Left cardiac atrium (tissue), 4 donors: ENCODE measurements at regions of chr1 and their contacts with region 1.

Region 1: DNA sequence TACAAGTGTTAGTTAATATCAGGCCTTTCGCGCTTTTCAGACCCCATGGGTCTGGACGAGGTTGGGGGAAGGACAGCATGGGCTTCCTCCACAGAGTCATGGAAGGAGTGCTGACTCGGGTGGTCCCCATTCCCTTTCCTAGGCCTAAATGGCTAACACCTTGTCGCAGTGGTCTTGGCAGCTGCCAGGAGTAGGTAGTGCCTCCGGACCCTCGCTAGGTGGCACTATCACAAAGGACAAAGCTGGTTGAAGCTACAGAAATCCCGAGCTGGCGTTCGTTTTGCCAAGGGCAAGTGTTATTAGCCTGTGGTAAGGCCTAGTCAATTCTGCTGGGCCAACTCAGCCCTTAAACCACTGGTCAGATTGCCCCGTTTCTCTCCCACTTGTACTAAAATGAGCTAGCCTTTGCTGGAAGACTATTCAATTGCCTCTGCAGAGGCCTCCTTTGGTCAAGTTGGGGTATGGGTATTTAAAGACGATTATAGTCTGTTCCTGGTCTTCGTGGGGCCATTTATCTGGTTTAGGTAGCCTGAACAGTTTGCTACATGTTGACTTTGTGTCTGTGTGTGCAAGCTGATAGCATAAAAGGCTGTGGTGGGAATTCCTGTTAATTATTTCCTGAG is 1.1 kb upstream of the UBE2Q1 start:
- DNase-seq: peak; percentile 89
- ATAC-seq: peak; percentile 67 to 78

Region 2: DNA sequence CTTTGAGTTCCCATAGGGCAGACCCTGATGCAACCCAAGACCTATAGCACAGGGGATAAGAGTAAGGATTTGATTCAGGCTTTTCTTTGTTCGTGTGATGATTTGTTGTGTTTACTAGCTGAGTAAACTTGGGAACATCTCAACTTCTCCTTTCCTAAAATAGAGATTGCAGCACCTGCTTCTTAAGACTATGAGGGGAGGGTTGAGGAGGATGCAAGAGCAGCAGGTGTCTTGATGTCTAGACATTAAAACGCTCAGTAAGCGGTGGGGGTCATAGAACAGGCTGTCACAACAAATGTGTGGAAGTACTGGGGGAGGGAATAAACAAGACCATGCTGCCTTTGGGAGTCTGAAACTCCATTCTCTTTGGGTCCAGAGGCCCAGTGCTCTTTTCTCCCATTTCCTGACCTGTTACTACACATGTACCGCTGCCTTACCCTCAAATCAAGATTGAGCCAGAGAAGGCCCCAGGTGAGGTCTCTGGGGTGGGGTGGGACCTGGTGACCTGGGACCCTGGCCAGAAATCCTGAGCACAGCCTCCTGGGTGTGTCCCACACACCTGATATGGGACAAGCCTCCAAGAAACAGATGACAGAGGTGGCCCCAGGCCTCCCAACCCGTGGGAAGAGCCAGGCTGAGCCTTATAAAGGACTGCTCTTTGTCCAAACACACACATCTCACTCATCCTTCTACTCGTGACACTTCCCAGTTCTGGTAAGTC is 1143.6 kb before region 1 on chr1 and contains the start of gene S100A7A:
- intact Hi-C with region 1: no loop called
- DNase-seq: no peak
- ATAC-seq: no peak
- total RNA-seq, gene S100A7A: not detected

Region 3: GRCh38 chr1:154751690-154752089 is 192.1 kb after region 1 on chr1:
- intact Hi-C with region 1: loop called in 1 of 2 experiments (anchors 10 kb)
- DNase-seq: no peak
- ATAC-seq: peak; percentile 54 to 62

Region 4: GRCh38 chr1:154760469-154760933 is 200.9 kb after region 1 on chr1:
- intact Hi-C with region 1: loop called (anchors 10 kb)
- DNase-seq: peak; percentile 72
- ATAC-seq: peak; percentile 86 to 95

Region 5: DNA sequence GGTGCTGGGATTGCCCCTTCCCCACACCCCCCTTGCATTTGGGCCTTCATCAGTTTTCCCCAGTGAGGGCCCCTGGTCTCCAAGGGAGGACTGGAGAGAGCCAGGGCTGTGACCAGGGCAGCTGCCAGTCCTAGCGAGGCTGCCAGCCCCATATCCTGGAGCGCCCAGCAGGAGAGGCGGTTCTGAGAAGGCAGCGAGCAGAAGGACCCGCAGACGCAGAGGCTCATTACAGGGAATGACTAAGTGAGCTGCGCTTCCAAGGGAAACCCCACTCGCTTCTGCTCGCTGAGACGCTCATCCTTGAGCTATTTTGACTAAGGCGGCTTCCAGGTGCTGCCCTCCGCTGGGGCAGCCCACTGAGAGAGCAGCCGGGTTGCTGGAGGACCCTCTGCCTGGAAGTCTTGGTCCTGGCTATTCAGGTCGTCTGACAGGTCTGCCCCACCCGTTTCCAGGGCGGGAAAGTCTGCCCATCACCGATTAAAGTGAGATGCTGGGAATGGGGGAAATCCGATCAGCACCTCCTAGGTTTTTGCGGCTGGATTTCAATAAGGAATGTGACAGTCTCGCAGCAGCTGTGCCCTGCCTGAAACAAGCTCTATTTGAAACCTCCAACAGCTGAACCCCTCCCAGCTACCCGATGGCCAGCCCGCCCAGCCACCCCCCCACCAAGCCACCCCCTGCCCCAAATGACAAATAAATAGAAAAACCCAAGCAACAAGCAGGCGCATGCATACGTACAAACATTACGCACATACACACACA is 307.7 kb after region 1 on chr1:
- intact Hi-C with region 1: no loop called
- DNase-seq: peak; percentile 55
- ATAC-seq: peak in 1 of 2 donors; percentile 41

Region 6: DNA sequence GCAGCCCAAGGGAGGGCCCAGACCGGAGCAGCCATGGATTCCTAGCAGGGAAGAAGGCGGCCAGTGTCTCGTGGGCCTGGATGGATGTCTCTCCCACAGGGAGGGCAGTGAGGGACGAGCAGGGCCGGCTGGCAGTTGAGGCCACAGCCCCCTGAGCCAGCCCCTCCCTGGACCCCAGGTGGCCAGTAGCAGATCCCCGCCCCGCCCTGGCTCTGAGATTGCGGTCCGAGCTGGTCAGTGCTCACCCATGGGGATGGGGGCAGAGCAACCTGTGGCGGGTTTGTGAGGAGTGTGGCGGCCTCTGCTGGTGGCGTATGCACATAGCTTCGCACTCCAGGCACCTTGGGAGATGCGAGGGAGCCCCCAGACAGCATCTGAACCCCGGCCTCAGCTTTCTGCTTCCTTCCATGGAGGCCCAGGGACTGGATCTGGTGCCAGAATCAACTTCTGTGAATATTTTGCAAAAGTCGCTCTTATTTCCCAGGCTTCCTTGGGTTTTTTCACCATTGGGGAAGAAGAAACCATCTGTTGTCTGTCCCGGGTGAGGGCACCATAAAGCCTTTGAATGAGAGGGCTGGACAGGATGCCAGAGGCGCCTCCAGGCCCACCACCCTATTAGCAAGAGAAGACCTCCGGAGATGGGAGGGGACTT is 318.9 kb after region 1 on chr1:
- intact Hi-C with region 1: loop called in 1 of 2 experiments (anchors 5 kb)
- DNase-seq: peak; percentile 84
- ATAC-seq: peak; percentile 92 to 93